ENCODE measurements at regions of chr6 and their contacts with region 1.

Region 1: GRCh38 chr6:116969211-116969863 is 92.3 kb downstream of the RFX6 start:
- DNase-seq: peak; percentile 50
- H3K4me3 ChIP-seq: no peak overlapping the region
- H3K27ac ChIP-seq: no peak overlapping the region
- H3K4me1 ChIP-seq: no peaks in the 10 kb centered on the region
- H3K27me3 ChIP-seq: no peaks in the 10 kb centered on the region
- CTCF ChIP-seq: peak; percentile 38 to 49
- POLR2A ChIP-seq: no peak

Region 2: GRCh38 chr6:116615937-116616736 is 353.2 kb before region 1 on chr6 and contains the start of gene RSPH4A:
- CTCF ChIA-PET with region 1: no interaction called
- POLR2A ChIA-PET with region 1: no interaction called
- dilution Hi-C with region 1: no loop called
- intact Hi-C with region 1: loop called (anchors 10 kb)
- DNase-seq: peak; percentile 98
- H3K4me3 ChIP-seq: peak within 1 kb of the TSS; percentile 52 to 84 (median 70)
- H3K27ac ChIP-seq: no peak within 1 kb of the TSS
- H3K4me1 ChIP-seq: peaks cover 9% of the 10 kb centered on the region
- H3K27me3 ChIP-seq: peaks cover 6 to 16% of the 10 kb centered on the region in 2 experiments
- CTCF ChIP-seq: no peak
- POLR2A ChIP-seq: no peak
- total RNA-seq, gene RSPH4A: 0.15 and 0.18 TPM in 2 replicates

Region 3: DNA sequence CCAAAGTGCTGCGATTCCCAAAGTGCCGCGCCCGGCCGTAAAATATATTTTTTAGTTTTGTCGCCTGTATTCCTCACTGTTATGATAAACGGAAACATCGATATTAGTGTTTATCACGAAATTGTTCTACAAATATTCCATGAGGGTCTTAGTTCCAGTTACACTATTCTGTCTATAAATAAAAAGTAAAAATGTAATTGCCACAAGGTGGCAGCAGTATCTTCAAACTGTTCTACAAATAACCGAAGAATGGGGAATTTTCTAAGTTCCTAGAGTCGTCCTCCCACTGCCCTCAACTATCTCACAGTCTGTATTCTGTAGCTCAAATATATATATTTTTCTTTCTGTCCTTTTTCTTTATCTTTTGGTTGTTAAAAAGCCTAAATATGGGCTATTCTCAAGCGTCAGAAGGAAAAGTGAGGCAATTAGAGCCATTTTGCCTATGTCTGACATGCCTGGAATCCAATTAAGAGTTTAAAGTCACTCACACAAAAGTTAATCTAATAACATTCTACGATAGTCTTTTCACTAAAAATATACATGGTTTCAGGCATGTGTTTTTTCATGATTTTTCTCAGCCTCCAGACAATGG is 189.7 kb before region 1 on chr6:
- CTCF ChIA-PET with region 1: no interaction called
- POLR2A ChIA-PET with region 1: no interaction called
- dilution Hi-C with region 1: no loop called
- intact Hi-C with region 1: loop called (anchors 1 kb)
- DNase-seq: peak; percentile 36
- H3K4me3 ChIP-seq: no peak overlapping the region
- H3K27ac ChIP-seq: no peak overlapping the region
- H3K4me1 ChIP-seq: no peaks in the 10 kb centered on the region
- H3K27me3 ChIP-seq: no peaks in the 10 kb centered on the region
- CTCF ChIP-seq: peak; percentile 16 to 34
- POLR2A ChIP-seq: no peak

Region 4: DNA sequence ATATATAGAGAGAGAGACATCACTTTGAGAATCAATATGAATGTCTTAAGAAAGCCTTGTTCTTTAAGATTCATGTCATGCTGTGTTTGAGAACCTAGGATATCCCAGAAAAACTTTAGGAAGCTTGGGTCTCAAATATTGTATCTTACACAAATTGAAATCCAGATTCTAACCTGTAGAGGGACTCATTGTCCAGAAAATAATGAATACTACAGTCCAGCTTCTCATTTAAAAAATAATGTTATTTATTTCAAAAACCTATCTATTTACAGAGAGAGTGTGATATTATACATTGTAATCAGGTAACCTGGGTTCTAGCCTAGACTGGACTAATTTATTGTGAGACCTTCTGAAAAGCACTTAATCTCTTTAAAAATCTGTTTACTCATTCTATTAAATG is 88.1 kb before region 1 on chr6:
- CTCF ChIA-PET with region 1: interaction called, 17 read pairs
- POLR2A ChIA-PET with region 1: no interaction called
- dilution Hi-C with region 1: no loop called
- intact Hi-C with region 1: no loop called
- DNase-seq: no peak
- H3K4me3 ChIP-seq: no peak overlapping the region
- H3K27ac ChIP-seq: no peak overlapping the region
- H3K4me1 ChIP-seq: no peaks in the 10 kb centered on the region
- H3K27me3 ChIP-seq: peaks cover 16 to 35% of the 10 kb centered on the region in 2 experiments
- CTCF ChIP-seq: no peak
- POLR2A ChIP-seq: no peak

Region 5: GRCh38 chr6:116933485-116933884 is 35.9 kb before region 1 on chr6:
- CTCF ChIA-PET with region 1: no interaction called
- POLR2A ChIA-PET with region 1: no interaction called
- dilution Hi-C with region 1: no loop called
- intact Hi-C with region 1: no loop called
- DNase-seq: no peak
- H3K4me3 ChIP-seq: no peak overlapping the region
- H3K27ac ChIP-seq: no peak overlapping the region
- H3K4me1 ChIP-seq: no peaks in the 10 kb centered on the region
- H3K27me3 ChIP-seq: peaks cover 0 to 2% of the 10 kb centered on the region in 2 experiments
- CTCF ChIP-seq: no peak
- POLR2A ChIP-seq: no peak

Region 6: DNA sequence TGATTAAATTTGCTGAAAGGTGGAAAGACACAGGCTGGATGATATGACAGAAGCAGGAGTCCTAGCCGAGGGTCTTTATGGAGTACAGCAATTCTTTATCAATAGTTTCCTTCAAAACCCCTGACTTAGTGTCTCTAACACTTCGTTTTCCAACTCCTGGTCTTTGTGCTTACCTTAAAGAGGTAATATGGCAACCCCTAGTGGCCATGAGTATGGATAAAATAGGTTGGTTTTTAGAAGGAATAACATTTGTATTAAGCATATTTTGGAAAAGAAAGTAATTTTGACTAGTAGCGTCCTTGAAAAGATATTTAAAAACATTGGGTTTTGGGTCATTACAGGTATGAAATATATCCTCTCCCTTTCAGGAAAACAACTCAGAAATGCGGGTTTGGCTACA is 347.9 kb after region 1 on chr6:
- CTCF ChIA-PET with region 1: no interaction called
- POLR2A ChIA-PET with region 1: no interaction called
- dilution Hi-C with region 1: no loop called
- intact Hi-C with region 1: loop called (anchors 1 kb)
- DNase-seq: no peak
- H3K4me3 ChIP-seq: no peak overlapping the region
- H3K27ac ChIP-seq: no peak overlapping the region
- H3K4me1 ChIP-seq: no peaks in the 10 kb centered on the region
- H3K27me3 ChIP-seq: no peaks in the 10 kb centered on the region
- CTCF ChIP-seq: no peak
- POLR2A ChIP-seq: no peak